ENCODE measurements at regions of chr9 and their contacts with region 1.

Region 1: DNA sequence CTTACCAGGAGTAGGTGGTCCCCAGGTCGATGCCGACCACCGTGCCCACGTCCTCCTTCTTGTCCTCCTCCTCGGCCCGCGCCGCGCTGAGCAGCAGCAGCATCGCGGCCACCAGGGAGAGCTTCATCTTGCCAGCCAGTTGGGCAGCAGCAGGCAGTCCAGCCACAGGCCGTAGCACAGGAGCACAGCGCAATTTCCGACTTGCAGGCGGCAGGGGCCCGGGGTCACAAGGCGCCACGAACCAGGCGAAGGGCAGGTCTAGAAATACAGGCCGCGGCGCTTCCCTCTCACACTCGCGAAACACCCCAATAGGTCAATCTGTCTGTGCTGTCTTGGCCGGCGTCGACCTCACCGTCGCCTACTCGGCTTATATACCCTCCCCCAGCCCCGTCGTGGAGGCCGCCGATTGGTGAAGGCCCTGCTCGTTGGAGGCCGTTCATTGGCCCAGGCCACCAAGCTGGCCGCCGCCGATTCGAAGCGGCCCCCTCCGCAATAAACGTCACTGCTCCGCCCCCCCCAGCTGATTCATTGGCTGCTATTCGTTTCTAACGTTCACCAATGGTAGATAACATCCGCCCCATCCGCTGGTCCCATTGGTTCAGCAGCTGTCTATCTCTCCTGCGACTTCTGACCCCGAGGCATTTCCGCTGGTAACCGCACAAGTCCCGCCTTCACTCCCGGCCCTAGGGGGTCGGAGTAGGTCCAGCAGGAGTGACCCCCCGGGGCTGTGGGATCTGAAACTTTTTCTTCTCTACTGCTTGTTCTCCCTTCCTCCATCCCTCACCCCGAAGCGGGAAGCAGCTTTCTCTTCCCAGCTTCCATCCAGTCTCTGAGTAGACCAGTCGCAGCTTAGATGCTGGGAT is at the start of gene HSPA5:
- DNase-seq: peak; percentile 100
- ATAC-seq: peak; percentile 92
- H3K4me3 Mint-ChIP-seq: peak within 1 kb of the TSS; percentile 96
- H3K27ac Mint-ChIP-seq: peak within 1 kb of the TSS; percentile 98
- H3K4me1 Mint-ChIP-seq: peaks cover 39% of the 10 kb centered on the region
- H3K27me3 Mint-ChIP-seq: no peaks in the 10 kb centered on the region
- total RNA-seq, gene HSPA5: 146 to 148 TPM

Region 2: GRCh38 chr9:124868511-124869465 is 372.4 kb before region 1 on chr9:
- CTCF ChIA-PET with region 1: no interaction called
- POLR2A ChIA-PET with region 1: interaction called, 21 read pairs
- DNase-seq: peak; percentile 93
- ATAC-seq: peak; percentile 83
- H3K4me3 Mint-ChIP-seq: peak overlapping the region; percentile 89
- H3K27ac Mint-ChIP-seq: peak overlapping the region; percentile 99
- H3K4me1 Mint-ChIP-seq: peaks cover 51% of the 10 kb centered on the region
- H3K27me3 Mint-ChIP-seq: no peaks in the 10 kb centered on the region

Region 3: DNA sequence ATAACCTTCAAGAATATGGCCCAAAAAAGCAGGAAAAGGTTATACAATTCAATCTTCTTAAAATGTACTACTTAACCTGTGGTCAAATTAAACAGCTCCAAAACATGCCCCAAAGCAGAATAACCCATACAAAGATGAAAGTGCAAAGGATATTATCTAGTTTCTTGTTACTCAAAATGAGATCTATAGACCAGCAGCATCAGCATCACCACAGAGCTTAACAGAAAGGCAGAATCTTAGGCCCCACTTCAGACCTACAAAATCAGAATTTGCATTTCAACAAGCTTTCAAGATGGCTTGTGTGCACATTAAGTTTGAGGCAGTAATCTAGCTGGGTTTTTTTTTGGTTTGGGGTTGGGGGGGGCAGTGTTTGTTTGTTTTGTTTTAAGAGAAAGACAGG is 151.9 kb before region 1 on chr9:
- CTCF ChIA-PET with region 1: no interaction called
- POLR2A ChIA-PET with region 1: no interaction called
- DNase-seq: no peak
- ATAC-seq: no peak
- H3K4me3 Mint-ChIP-seq: no peak overlapping the region
- H3K27ac Mint-ChIP-seq: no peak overlapping the region
- H3K4me1 Mint-ChIP-seq: no peaks in the 10 kb centered on the region
- H3K27me3 Mint-ChIP-seq: no peaks in the 10 kb centered on the region

Region 4: GRCh38 chr9:125106285-125106893 is 134.8 kb before region 1 on chr9:
- CTCF ChIA-PET with region 1: no interaction called
- POLR2A ChIA-PET with region 1: no interaction called
- DNase-seq: no peak
- ATAC-seq: no peak
- H3K4me3 Mint-ChIP-seq: no peak overlapping the region
- H3K27ac Mint-ChIP-seq: no peak overlapping the region
- H3K4me1 Mint-ChIP-seq: no peaks in the 10 kb centered on the region
- H3K27me3 Mint-ChIP-seq: no peaks in the 10 kb centered on the region

Region 5: GRCh38 chr9:125189361-125190289 is 51.6 kb before region 1 on chr9 and contains the start of gene PPP6C:
- CTCF ChIA-PET with region 1: interaction called, 9 read pairs
- POLR2A ChIA-PET with region 1: interaction called, 22 read pairs
- DNase-seq: peak; percentile 99
- ATAC-seq: peak; percentile 98
- H3K4me3 Mint-ChIP-seq: peak within 1 kb of the TSS; percentile 89
- H3K27ac Mint-ChIP-seq: peak within 1 kb of the TSS; percentile 95
- H3K4me1 Mint-ChIP-seq: peaks cover 49% of the 10 kb centered on the region
- H3K27me3 Mint-ChIP-seq: no peaks in the 10 kb centered on the region
- total RNA-seq, gene PPP6C: 47.2 to 51.9 TPM

Region 6: GRCh38 chr9:125214186-125214585 is 27.0 kb before region 1 on chr9:
- CTCF ChIA-PET with region 1: interaction called, 3 read pairs
- POLR2A ChIA-PET with region 1: interaction called, 10 read pairs
- DNase-seq: no peak
- ATAC-seq: no peak
- H3K4me3 Mint-ChIP-seq: no peak overlapping the region
- H3K27ac Mint-ChIP-seq: peak overlapping the region; percentile 37
- H3K4me1 Mint-ChIP-seq: no peaks in the 10 kb centered on the region
- H3K27me3 Mint-ChIP-seq: no peaks in the 10 kb centered on the region

Region 7: DNA sequence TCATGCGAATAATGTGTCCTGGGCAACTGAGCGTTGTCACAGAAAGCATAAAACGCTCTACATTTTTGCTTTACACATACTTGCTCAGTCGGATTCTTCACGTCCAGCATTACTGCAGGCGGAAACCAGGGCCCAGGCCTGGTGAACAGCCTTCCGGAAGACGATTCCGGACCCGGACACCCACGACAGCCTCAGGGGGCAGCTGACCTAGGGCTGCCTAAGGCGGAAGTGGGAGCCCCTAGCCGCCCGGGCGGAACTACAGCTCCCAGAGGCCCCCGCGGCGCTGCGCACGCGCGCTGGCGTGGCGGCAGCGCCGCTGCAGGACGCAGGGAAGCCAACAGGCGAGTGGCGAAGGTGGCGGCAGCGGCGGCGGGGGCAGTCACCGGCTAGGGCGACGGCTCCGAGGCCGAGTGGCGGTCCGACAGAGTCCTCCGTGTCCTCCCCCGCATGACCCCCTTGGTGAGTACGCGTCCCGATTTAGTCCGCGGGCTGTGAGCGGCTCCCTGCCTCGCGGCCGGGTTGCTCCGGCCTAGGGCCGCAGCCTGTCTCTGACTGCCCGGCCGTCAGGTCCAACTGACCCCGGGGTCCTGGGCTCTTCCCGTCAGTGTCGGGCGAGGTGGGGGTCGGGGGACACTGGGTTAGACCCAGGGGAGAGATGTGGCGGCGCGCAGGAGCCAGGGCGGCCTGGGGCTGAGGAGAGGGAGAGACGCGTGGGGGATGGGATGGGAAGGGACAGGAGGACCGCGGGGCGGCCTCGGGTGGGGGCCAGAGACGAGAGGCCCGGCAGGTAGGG is 20.5 kb after region 1 on chr9 and contains the start of gene GAPVD1:
- CTCF ChIA-PET with region 1: interaction called, 13 read pairs
- POLR2A ChIA-PET with region 1: interaction called, 89 read pairs
- DNase-seq: peak; percentile 92
- ATAC-seq: peak; percentile 95
- H3K4me3 Mint-ChIP-seq: peak within 1 kb of the TSS; percentile 99
- H3K27ac Mint-ChIP-seq: peak within 1 kb of the TSS; percentile 96
- H3K4me1 Mint-ChIP-seq: peaks cover 44% of the 10 kb centered on the region
- H3K27me3 Mint-ChIP-seq: no peaks in the 10 kb centered on the region
- total RNA-seq, gene GAPVD1: 52.1 to 59.4 TPM